Gastrocnemius medialis (tissue), 4 donors: ENCODE measurements at regions of chr3 and their contacts with region 1.

Region 1: DNA sequence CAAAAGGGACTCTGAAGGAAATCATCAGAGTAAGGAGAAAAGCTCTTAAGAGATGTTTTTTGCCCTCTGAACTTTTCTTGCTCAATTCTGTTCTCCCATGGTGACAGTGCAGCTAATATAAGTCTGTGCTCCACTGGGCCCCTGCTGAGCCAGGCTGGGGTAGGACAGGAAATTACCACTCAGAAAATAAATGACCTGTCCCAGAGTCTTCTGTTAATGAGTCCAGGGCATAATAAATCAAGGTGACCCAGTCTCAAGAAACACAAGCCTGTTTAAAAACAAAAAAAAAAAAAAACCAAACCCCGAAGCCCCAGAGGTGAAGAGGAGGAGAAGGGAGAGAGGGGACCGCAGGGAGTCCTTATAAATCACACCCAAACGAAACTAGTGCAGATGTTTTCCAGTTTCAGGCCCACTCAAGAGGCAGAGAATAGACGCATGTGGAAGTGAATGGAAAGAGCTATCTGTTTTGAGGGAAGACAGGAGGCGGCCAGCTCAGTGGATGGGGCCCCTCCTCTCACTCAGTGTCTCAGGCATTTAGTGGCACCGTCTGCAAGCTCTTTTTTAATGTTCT is 59.8 kb upstream of the BOC start:
- DNase-seq: peak; percentile 10 to 27
- ATAC-seq: peak; percentile 70 to 72
- H3K4me3 ChIP-seq: no peak overlapping the region
- H3K27ac ChIP-seq: peak overlapping the region; percentile 43 to 62 (median 52)
- H3K4me1 ChIP-seq: peaks cover 0 to 21% of the 10 kb centered on the region in 2 donors
- H3K27me3 ChIP-seq: no peaks in the 10 kb centered on the region
- CTCF ChIP-seq: no peak
- POLR2A ChIP-seq: no peak

Region 2: DNA sequence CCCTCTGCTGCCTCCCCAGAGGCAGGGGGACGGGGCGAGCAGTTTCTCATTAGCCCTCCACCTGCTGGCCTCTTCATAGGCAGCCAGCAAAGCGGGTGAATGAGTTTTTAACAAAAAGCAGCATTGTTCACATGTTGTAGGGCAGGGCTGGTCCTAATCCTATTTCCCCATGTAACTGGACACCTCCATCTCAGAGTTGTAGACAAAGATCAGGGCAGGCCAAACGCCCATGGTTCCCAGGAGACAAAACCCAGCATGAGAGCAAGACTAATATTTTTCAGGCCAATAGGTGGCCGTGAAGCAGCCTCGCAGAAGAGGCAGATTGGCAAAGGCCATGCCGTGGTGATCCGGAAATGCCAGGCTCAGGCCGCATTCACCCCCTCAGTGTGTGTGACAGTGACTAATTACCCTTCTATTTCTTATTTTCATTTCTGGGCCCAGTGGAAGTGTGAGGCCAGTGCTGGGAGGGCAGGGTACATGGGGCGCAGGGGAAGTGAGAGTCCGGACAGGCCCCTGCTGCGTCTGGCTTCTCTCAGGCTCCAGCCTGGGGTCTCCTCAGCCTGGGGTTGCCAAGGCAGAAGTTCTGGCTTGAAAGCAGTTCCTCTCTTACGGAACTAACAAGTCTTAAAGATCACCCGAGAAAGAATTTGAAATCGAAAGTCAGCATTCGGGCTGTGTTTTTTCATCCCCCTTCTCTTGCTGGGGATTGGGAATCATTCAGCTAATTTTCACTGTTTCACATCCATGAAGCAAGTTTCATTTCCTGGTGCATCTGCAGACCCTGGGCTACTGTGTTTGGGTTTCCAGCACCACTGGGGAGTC is 124.6 kb after region 1 on chr3:
- in situ Hi-C with region 1: no loop called
- intact Hi-C with region 1: loop called (anchors 10 kb)
- DNase-seq: peak in 1 of 2 donors; percentile 56
- ATAC-seq: peak; percentile 55 to 71
- H3K4me3 ChIP-seq: peak overlapping the region; percentile 23 to 35 (median 31)
- H3K27ac ChIP-seq: peak overlapping the region; percentile 32 to 74 (median 68)
- H3K4me1 ChIP-seq: peaks cover 8 to 12% of the 10 kb centered on the region in 2 donors
- H3K27me3 ChIP-seq: no peaks in the 10 kb centered on the region
- CTCF ChIP-seq: peak in 1 of 5 experiments; percentile 8
- POLR2A ChIP-seq: no peak